GM12878 (cell line): ENCODE measurements at regions of chr12 and their contacts with region 1.

Region 1: DNA sequence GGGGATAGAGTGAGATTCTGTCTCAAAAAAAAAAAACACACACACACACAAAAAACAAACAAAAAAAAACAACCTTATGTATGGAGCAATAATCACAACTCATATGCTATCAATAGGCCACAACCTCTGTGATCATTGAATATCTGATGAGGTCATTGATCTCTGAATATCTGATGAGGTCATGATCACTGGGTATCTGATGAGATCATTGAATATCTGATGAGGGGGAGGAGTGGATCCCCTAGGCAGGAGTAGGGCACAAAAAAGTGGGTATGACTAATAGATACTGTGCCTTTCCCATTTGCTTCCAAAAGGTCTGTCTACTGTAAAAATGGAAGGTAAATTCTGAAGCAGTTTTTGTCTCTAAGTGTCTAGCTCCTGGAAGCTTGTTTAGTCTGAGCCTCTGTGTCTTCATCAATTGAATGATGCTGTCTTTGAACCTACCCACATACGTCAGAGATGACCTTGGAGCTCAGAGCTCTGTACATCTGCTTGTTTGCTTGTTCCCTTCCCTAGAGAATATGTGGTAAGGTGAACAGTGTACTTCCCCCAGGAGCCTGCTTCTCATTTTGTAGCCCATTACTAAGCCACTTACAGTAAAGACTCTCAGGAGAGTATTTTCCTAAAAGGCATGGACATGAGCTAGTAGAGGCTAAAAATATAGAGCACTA is 13.6 kb downstream of the PAH start:
- DNase-seq: no peak
- ATAC-seq: peak; percentile 53
- H3K4me3 ChIP-seq: no peak overlapping the region
- H3K27ac ChIP-seq: no peak overlapping the region
- H3K4me1 ChIP-seq: no peaks in the 10 kb centered on the region
- H3K27me3 ChIP-seq: no peaks in the 10 kb centered on the region
- CTCF ChIP-seq: no peak
- EP300 ChIP-seq: no peak
- POLR2A ChIP-seq: no peak
- RAD21 ChIP-seq: no peak

Region 2: DNA sequence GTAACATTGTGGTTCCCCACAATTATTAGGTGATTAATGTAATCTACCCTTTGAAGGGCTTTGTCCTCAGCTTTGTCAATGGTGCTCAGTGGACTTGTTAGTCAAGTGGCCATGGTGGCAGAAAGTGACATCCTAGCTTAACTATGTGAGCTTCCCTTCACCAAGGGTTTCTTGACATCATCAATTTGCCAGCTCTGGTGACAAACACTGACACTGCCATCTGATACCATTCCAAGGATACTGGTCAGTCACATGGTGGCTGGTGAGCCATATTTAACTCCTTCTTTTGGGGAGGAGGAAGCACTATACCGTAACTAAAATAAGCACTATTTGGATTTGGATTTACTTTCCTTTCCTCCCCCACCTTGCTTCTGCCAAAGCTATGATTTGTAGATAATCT is 538.8 kb before region 1 on chr12:
- CTCF ChIA-PET with region 1: no interaction called
- POLR2A ChIA-PET with region 1: no interaction called
- RAD21 ChIA-PET with region 1: no interaction called
- SMC1A ChIA-PET with region 1: no interaction called
- in situ Hi-C with region 1: no loop called
- intact Hi-C with region 1: no loop called
- DNase-seq: no peak
- ATAC-seq: no peak
- H3K4me3 ChIP-seq: no peak overlapping the region
- H3K27ac ChIP-seq: no peak overlapping the region
- H3K4me1 ChIP-seq: no peaks in the 10 kb centered on the region
- H3K27me3 ChIP-seq: no peaks in the 10 kb centered on the region
- CTCF ChIP-seq: no peak
- EP300 ChIP-seq: no peak
- POLR2A ChIP-seq: no peak
- RAD21 ChIP-seq: no peak

Region 3: DNA sequence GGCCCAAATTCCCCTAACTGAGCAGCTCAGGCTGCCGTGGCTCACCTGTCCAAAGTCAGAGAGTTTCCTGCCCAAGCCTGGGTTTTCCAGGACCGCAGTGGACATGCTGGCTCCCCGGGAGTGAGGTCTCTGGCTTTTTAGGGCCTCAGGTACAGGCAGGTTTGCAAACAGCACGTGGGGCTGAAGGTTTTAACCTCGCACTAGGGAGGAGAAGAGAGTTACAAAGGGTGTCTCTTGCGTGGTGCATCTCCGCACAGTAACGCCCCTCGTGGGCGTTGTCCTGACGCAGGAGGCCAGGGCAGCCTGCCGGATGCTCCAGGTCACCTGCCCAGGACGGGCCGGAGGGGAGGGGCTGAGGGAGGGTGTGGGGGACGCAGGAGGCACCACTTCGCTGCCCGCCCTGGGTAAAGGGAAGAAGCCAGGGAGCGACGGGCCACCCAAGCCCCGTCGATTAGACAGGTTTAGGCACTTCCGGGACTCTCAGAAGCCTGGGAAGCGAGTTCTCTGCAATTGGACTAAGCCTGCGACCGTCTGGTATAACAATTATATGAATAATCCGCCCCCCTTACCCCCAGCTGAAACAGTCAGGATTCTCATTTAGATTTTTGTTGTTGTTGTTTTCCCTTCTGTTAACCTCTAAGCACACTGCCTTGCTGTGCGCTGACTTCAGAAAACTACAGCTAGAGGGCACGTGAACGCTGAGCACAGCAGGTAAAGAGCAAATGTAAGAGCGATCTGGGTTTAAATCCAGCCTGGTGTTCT is 13.7 kb after region 1 on chr12 and contains the start of gene PAH:
- CTCF ChIA-PET with region 1: interaction called, 10 read pairs
- POLR2A ChIA-PET with region 1: interaction called, 7 read pairs
- RAD21 ChIA-PET with region 1: interaction called, 12 read pairs
- SMC1A ChIA-PET with region 1: interaction called, 34 read pairs
- in situ Hi-C with region 1: no loop called
- intact Hi-C with region 1: no loop called
- DNase-seq: no peak
- ATAC-seq: peak; percentile 85
- H3K4me3 ChIP-seq: peak within 1 kb of the TSS; percentile 40
- H3K27ac ChIP-seq: no peak within 1 kb of the TSS
- H3K4me1 ChIP-seq: peaks cover 14% of the 10 kb centered on the region
- H3K27me3 ChIP-seq: no peaks in the 10 kb centered on the region
- CTCF ChIP-seq: peak; percentile 14 to 27 (median 20); a peak in 3 of 6 replicates
- EP300 ChIP-seq: no peak
- POLR2A ChIP-seq: no peak
- RAD21 ChIP-seq: peak; percentile 18; the same call in 1 of the 2 replicates
- polyA plus RNA-seq, gene PAH: 0.20 to 0.31 TPM